ENCODE measurements at regions of chr1 and their contacts with region 1.

Region 1: DNA sequence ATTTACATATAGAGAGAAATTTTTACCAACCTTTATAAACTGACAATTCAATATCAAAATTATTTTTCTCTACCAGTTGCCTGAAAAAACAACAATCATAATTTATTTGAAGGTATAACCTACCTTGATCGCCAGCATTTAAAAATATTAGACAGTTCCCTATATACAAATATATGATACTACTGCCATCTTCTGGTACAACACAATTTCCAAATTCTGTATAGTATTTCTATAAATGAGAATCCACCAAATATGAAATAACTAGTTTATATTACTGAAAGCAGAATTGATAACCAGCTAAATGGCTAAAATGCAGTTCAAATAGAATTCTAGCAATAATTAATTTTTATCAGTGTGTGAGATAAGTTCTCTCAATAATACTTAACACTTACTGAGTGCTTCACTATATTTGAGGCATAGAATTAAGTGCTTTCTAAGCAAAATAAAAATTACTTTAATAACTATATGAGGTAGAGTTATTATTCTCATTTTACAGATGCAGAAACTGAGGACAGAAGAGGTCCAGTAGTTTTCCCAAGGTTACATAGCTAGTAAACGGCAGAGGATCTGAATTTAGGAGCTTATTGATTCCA is 75.6 kb downstream of the PIGK start:
- DNase-seq: no peak
- ATAC-seq: peak; percentile 36

Region 2: DNA sequence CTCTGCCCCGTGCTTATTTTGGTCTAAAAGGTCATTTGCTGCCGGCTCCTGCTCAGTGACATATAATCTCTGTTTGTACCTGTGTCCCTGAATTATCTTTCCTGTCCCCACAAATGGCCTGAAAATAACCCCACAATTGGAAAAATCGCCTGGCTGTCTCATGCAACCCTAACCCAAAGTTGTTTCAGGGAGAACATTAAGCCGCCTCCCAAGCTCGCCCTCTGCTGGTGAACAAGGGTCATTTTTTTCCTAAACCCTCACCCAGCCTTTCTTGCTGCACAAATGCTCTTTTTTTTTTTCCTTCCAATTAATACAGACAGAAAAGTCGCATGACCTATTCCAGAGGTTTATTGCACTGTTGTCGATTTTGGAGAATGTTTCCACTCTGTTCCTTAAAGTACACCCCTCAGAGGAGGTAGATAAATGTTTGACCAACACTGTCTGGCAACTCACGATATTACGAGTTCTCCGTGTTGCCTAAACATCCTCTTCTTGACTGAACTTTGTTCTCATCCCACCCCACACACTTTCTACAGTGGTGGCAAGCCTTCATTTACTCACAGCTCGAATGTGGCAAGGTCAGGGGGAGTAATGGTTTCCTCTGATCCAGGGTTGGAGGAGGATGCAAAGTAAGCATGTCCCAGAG is 390.2 kb after region 1 on chr1:
- intact Hi-C with region 1: loop called (anchors 5 to 10 kb)
- DNase-seq: peak in 1 of 2 donors; percentile 40
- ATAC-seq: peak; percentile 69

Measured in left colon (tissue), 2 donors.